ENCODE measurements at regions of chr3 and their contacts with region 1.

Region 1: DNA sequence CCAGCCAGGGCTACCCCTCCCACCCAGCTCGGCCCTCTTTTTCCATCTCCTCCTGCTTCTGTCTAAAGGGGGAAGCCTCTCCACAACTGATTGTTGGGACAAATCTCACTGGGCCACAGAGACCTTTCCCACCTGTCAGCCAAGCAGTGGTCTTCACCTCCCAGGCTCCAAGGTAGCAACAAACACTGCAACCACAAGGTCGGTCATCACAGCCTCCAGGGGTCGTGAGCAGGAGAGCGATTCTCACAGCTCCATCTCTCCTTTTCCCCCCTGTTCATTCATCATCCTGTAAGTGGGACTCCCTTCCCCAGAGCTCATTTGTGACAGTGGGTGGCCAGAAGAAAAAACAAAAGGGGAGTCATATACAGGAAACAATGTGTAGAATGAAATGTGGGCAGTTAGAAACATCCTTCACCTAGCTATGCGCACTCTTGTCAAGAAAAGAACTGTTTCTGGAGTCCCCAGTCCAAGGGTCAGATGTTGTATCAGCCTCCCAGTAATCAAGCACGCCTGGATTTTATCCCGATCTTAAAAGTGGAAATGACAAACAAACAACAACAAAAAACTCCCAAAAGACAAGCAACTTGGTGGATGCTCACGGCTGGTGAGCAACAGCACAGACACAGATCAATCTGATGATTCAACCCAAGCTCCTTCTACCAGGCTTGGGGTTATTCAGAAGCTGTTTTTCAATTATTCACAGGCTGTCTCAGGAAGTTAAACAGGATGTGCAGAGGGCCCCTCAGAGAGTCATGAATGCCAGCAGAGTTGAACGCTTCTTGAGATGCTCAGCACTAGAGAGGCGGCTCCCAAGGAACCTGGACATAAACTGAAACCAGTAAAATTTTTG is 22.4 kb downstream of the LYZL4 start:
- DNase-seq: peak; percentile 71
- ATAC-seq: peak; percentile 99
- H3K4me3 Mint-ChIP-seq: peak overlapping the region; percentile 25
- H3K27ac Mint-ChIP-seq: peak overlapping the region; percentile 95
- H3K4me1 Mint-ChIP-seq: peaks cover 24% of the 10 kb centered on the region
- H3K27me3 Mint-ChIP-seq: peaks cover 2% of the 10 kb centered on the region

Region 2: DNA sequence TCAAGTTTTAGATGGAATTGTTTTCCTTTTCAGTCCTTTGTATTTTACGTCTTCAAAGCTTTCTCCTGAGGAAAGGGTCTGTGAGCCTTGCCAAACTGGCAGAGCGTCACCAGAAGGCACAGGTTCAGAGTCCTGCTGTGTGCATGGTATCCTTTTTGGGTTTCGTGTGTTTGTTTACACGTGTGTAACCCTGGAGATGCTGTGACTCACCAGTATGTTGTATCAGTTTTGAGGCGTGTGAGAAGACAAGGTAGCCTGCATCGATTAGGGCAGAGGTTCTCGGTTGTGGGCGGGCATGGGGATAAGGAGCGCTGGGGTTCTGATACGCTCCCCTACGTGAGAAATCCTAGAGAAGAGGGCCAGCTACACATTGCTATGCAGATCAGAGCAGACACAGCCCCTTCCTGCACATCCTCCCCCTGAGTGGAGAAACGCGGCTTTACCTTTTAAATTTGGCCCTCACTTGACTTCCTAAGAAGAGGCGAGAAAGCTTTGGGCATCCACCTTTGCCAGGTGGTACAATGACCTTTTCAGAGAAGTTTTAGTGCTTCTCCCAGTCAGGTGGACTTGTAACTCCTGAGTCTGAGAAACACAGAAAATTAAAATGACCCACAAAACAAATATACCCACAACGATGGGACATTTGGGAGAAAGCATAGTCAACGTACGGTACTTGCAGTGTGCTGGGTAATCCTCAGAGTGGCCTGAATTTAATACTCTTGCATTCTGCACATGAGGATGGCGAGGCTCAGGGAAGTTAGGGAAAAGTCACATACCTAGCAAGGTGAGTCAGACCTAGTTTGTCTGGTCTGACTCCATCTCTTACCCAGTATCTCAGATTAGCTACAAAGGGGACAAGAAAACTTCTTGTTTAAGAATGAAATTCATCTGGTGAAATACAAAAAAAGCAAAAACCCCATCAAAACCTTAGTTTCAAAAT is 258.7 kb before region 1 on chr3:
- CTCF ChIA-PET with region 1: no interaction called
- POLR2A ChIA-PET with region 1: no interaction called
- intact Hi-C with region 1: no loop called
- DNase-seq: no peak
- ATAC-seq: peak; percentile 33
- H3K4me3 Mint-ChIP-seq: no peak overlapping the region
- H3K27ac Mint-ChIP-seq: no peak overlapping the region
- H3K4me1 Mint-ChIP-seq: peaks cover 2% of the 10 kb centered on the region
- H3K27me3 Mint-ChIP-seq: no peaks in the 10 kb centered on the region

Region 3: GRCh38 chr3:42376344-42376798 is 11.7 kb before region 1 on chr3:
- CTCF ChIA-PET with region 1: interaction called, 6 read pairs
- POLR2A ChIA-PET with region 1: no interaction called
- intact Hi-C with region 1: loop called in 1 of 2 experiments (anchors 1 kb)
- DNase-seq: peak; percentile 87
- ATAC-seq: peak; percentile 97
- H3K4me3 Mint-ChIP-seq: no peak overlapping the region
- H3K27ac Mint-ChIP-seq: no peak overlapping the region
- H3K4me1 Mint-ChIP-seq: peaks cover 4% of the 10 kb centered on the region
- H3K27me3 Mint-ChIP-seq: peaks cover 11% of the 10 kb centered on the region

Region 4: DNA sequence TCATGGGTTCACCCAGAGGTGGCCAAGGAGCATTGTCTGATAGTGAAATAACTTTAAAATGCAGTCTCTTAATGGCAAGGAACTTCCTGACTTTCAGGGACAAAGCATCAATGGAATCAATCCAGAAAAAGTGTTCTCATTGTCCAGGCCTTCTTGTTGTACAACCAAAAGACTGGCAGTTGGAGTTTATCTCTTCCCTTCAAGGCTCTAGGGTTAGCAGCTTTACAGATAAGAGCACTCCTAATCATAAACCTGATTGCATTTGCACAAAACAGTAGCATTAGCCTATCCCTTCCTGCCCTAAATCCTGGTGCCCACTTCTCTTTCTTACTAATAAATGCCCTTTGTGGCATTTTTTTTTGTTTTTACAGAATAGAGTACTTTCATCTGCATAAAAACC is 71.1 kb after region 1 on chr3:
- CTCF ChIA-PET with region 1: no interaction called
- POLR2A ChIA-PET with region 1: no interaction called
- intact Hi-C with region 1: no loop called
- DNase-seq: no peak
- ATAC-seq: no peak
- H3K4me3 Mint-ChIP-seq: no peak overlapping the region
- H3K27ac Mint-ChIP-seq: no peak overlapping the region
- H3K4me1 Mint-ChIP-seq: no peaks in the 10 kb centered on the region
- H3K27me3 Mint-ChIP-seq: peaks cover 4% of the 10 kb centered on the region

Measured in activated CD4-positive, alpha-beta T cell treated with anti-CD3 and anti-CD28 coated beads for 36 hours (primary cell).